PC-9 (cell line): ENCODE measurements at regions of chr16 and their contacts with region 1.

Region 1: DNA sequence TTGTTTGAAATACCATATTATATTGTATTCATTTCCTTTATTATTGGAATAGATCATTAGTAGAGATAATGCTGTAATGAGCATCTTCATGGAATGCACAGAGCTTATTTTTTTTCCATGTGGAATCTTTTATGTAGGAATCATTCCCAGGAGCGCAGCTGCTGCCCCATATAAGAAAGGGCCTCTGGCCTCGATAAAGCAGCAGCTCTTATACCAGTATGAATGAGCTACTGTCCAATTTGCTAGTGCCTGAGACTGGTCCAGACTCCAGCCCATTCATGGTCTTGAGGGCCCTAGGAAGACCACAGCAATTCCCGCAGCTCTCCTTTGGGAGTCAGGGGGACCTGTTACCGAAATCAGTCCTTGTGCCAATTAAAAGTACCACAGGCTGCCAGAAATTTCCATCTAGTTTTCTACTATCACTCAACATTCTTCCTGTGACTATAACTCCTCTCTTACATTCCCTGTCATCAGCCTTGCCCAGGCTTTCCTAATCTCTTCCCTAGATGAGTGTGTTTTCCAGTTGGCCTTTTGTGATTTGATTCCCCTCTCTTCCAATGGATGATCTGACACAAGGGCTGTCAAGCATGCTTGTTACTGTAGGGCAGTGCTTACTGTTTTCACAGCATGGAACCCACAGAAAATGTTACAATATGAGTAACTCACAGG is 1.9 kb downstream of the ZNF843 start:
- DNase-seq: no peak
- H3K4me3 ChIP-seq: no peak overlapping the region
- H3K27ac ChIP-seq: no peak overlapping the region
- H3K4me1 ChIP-seq: no peaks in the 10 kb centered on the region
- H3K27me3 ChIP-seq: no peaks in the 10 kb centered on the region
- CTCF ChIP-seq: no peak

Region 2: GRCh38 chr16:30977502-30977901 is 463.1 kb before region 1 on chr16:
- CTCF ChIA-PET with region 1: no interaction called
- POLR2A ChIA-PET with region 1: no interaction called
- intact Hi-C with region 1: no loop called
- DNase-seq: peak in 1 of 2 experiments; percentile 21
- H3K4me3 ChIP-seq: no peak overlapping the region
- H3K27ac ChIP-seq: no peak overlapping the region
- H3K4me1 ChIP-seq: no peaks in the 10 kb centered on the region
- H3K27me3 ChIP-seq: no peaks in the 10 kb centered on the region
- CTCF ChIP-seq: peak; percentile 54

Region 3: DNA sequence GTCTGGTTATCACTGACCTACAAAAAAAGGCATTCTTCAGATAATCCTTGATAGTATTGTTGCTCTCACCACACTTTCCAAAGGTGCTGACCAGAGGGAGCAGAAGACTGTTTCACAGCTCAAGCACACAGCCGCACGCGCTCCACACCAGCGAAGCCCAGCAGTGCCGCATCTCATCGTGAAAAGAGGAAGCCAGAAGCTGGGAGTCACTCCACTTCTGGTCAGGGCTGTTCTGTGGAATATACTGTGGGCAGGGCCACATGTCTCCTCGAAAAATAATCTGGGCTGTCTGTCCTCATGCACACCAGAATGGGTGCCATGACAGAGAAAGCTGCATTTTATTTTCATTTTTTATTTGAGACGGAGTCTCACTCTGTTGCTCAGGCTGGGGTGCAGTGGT is 283.5 kb before region 1 on chr16:
- CTCF ChIA-PET with region 1: interaction called, 13 read pairs
- POLR2A ChIA-PET with region 1: no interaction called
- intact Hi-C with region 1: no loop called
- DNase-seq: no peak
- H3K4me3 ChIP-seq: no peak overlapping the region
- H3K27ac ChIP-seq: no peak overlapping the region
- H3K4me1 ChIP-seq: peaks cover 10% of the 10 kb centered on the region; the same call in 1 of the 2 replicates
- H3K27me3 ChIP-seq: no peaks in the 10 kb centered on the region
- CTCF ChIP-seq: no peak

Region 4: GRCh38 chr16:31202414-31203375 is 238.0 kb before region 1 on chr16 and contains the start of gene PYCARD:
- CTCF ChIA-PET with region 1: no interaction called
- POLR2A ChIA-PET with region 1: interaction called, 3 read pairs
- intact Hi-C with region 1: loop called (anchors 5 kb)
- DNase-seq: peak in 1 of 2 experiments; percentile 65
- H3K4me3 ChIP-seq: peak within 1 kb of the TSS; percentile 47
- H3K27ac ChIP-seq: no peak within 1 kb of the TSS
- H3K4me1 ChIP-seq: peaks cover 19% of the 10 kb centered on the region
- H3K27me3 ChIP-seq: no peaks in the 10 kb centered on the region
- CTCF ChIP-seq: no peak
- total RNA-seq, gene PYCARD: 72.9 and 107 TPM in 2 replicates

Region 5: DNA sequence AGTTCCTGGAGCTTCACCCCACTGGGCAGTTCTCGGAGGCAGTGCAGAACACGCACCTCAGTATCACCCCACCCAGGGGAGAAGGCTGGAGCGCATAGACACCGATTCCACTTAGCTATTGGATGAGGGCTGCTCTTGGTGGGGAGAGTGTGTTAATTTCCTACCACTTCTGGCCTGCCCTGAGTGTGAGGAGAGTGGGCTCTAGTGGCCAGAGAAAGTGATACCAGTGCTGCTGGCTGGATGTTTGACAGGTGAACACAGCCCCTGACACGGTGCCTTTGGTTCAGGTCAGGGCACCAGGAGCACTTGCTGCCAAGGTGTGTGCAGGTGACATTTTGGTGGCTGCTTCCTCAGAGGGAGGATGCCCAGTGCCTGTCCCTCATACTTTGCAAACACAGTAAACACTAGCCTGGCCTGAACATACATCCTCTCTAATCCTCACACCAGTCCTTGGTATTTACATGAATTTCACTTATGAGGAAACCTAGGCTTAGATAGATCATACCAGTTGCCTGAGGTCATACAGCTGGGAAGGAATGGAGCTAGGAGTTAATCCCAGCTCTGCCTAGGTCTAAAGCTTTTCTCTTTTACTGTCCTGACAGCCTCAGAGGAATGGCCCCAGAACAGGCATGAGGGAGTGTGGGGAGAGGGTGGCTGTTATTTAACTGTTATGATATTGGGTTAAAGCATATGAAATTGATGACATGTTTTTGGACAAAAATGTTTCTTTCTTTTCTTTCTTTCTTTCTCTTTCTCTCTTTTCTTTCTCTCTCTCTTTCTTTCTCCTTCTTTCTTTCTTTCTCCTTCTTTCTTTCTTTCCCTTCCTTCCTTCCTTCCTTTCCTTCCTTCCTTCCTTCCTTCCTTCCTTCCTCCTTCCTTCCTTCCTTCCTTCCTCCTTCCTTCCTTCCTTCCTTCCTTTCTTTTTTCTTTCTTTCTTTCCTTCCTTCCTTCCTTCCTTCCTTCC is 106.7 kb before region 1 on chr16:
- CTCF ChIA-PET with region 1: no interaction called
- POLR2A ChIA-PET with region 1: no interaction called
- intact Hi-C with region 1: loop called (anchors 1 kb)
- DNase-seq: peak; percentile 57 to 60
- H3K4me3 ChIP-seq: no peak overlapping the region
- H3K27ac ChIP-seq: no peak overlapping the region
- H3K4me1 ChIP-seq: no peaks in the 10 kb centered on the region
- H3K27me3 ChIP-seq: peaks cover 47% of the 10 kb centered on the region
- CTCF ChIP-seq: peak; percentile 70

Region 6: GRCh38 chr16:31351942-31352325 is 88.7 kb before region 1 on chr16:
- CTCF ChIA-PET with region 1: no interaction called
- POLR2A ChIA-PET with region 1: no interaction called
- intact Hi-C with region 1: no loop called
- DNase-seq: no peak
- H3K4me3 ChIP-seq: no peak overlapping the region
- H3K27ac ChIP-seq: no peak overlapping the region
- H3K4me1 ChIP-seq: peaks cover 8% of the 10 kb centered on the region; the same call in 1 of the 2 replicates
- H3K27me3 ChIP-seq: peaks cover 19% of the 10 kb centered on the region
- CTCF ChIP-seq: no peak